ENCODE measurements at regions of chr17 and their contacts with region 1.

Region 1: GRCh38 chr17:45277216-45277849 is 15.4 kb upstream of the SPATA32 start:
- DNase-seq: peak; percentile 96
- ATAC-seq: peak; percentile 80 to 82
- H3K4me3 ChIP-seq: no peak overlapping the region
- H3K27ac ChIP-seq: peak overlapping the region; percentile 52 to 72
- H3K4me1 ChIP-seq: peaks cover 29% of the 10 kb centered on the region
- CTCF ChIP-seq: peak; percentile 92
- EP300 ChIP-seq: no peak
- POLR2A ChIP-seq: no peak
- RAD21 ChIP-seq: peak; percentile 91 to 93

Region 2: GRCh38 chr17:45161019-45161825 is 116.1 kb before region 1 on chr17:
- CTCF ChIA-PET with region 1: no interaction called
- POLR2A ChIA-PET with region 1: no interaction called
- DNase-seq: peak; percentile 98 to 100
- ATAC-seq: peak; percentile 95 to 96
- H3K4me3 ChIP-seq: peak overlapping the region; percentile 81
- H3K27ac ChIP-seq: peak overlapping the region; percentile 98 to 99
- H3K4me1 ChIP-seq: peaks cover 39% of the 10 kb centered on the region
- CTCF ChIP-seq: no peak; the same call in 1 of the 3 replicates
- EP300 ChIP-seq: no peak
- POLR2A ChIP-seq: peak; percentile 48
- RAD21 ChIP-seq: no peak; a peak in 2 of 5 replicates

Region 3: DNA sequence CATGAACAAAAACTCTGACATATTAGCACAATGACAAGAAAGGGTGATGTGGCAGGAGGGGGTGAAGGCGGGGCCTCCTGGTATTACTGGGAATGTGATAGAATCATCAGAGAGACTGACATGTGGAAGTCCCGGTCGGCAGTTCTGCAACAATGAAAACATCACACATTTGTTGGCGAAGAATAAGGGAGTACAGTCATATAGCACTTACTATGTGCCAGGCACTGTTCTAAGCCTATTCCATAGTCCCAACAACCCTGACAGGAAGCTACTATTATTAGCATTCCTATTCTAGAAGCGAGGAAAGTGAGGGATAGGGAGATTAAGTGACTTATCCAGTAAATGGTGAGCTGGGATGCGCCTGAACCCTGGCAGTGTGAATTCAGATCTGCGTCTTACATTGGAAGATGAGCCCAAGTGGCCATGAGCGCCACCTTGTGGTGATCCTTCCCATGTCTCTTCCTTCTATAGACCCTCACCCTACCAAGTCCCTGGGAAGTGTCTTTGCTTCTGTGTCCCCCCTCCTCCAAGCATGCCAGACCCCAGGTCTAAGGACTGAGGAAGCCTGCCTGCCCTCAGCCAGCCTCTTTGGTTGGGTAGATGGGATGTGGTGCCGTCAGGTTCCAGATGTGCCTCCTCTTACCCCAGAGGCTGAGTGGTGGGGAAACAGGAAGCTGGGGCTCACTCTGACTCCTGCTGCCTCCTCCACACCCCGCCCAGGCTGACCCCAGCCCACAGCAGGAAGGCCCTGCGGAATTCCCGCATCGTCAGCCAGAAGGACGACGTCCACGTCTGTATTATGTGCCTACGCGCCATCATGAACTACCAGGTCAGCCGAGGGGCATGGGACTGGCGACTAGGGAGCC is 41.7 kb before region 1 on chr17:
- CTCF ChIA-PET with region 1: interaction called, 28 read pairs
- POLR2A ChIA-PET with region 1: no interaction called
- DNase-seq: peak; percentile 87 to 93
- ATAC-seq: peak; percentile 60 to 75
- H3K4me3 ChIP-seq: no peak overlapping the region
- H3K27ac ChIP-seq: peak overlapping the region; percentile 35 to 66; a peak in 5 of 6 replicates
- H3K4me1 ChIP-seq: peaks cover 33% of the 10 kb centered on the region
- CTCF ChIP-seq: peak; percentile 95
- EP300 ChIP-seq: no peak
- POLR2A ChIP-seq: no peak
- RAD21 ChIP-seq: peak; percentile 79 to 82

Region 4: GRCh38 chr17:45261577-45262515 is 15.5 kb before region 1 on chr17 and contains the start of gene SPATA32:
- CTCF ChIA-PET with region 1: interaction called, 291 read pairs
- POLR2A ChIA-PET with region 1: no interaction called
- DNase-seq: no peak
- ATAC-seq: no peak
- H3K4me3 ChIP-seq: no peak within 1 kb of the TSS
- H3K27ac ChIP-seq: peak within 1 kb of the TSS in 1 of 2 experiments; percentile 54; a peak in 3 of 6 replicates
- H3K4me1 ChIP-seq: peaks cover 46% of the 10 kb centered on the region
- CTCF ChIP-seq: no peak
- EP300 ChIP-seq: no peak
- POLR2A ChIP-seq: no peak
- RAD21 ChIP-seq: no peak
- polyA plus RNA-seq, gene SPATA32: 0.05 and 0.08 TPM in 2 replicates

Region 5: DNA sequence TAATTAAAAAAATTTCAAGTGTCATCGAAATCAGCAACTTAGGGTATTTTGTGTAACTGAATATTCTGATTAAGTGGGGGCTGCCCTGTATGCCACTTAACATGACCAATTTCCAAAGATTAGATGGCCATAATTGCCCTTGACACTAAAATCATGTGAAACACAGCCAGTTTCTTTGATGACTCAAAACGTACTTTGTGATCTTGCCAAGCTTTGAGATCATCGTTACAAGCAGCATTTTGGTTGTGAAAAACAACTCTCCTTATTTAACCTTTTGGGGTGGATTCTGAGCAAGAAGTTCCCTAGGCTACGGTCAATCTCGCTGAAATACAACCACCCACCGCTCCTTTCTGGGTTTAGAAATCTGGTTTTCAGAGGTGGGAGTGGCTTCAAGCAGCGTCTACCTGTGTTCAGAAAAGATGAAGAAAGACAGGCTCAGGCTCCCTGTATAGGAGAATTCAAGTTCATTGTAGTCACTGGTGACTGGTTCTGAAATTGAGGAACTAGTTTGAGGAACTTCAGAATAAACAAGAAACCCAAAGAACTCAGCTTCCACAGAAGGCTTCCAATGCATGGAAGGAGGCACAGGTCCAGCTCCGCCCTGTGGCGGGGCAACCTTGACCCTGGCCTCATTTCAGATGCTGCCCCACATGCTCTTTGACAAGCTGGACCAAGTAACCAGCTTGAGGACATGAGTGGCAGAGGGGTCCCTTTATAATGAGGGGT is 30.1 kb after region 1 on chr17:
- CTCF ChIA-PET with region 1: interaction called, 181 read pairs
- POLR2A ChIA-PET with region 1: interaction called, 4 read pairs
- DNase-seq: peak in 1 of 2 experiments; percentile 69
- ATAC-seq: peak; percentile 16 to 28; a peak in 5 of 6 replicates
- H3K4me3 ChIP-seq: peak overlapping the region; percentile 10; the same call in 1 of the 3 replicates
- H3K27ac ChIP-seq: peak overlapping the region; percentile 77 to 92
- H3K4me1 ChIP-seq: peaks cover 92% of the 10 kb centered on the region
- CTCF ChIP-seq: no peak
- EP300 ChIP-seq: no peak
- POLR2A ChIP-seq: no peak
- RAD21 ChIP-seq: no peak

Region 6: DNA sequence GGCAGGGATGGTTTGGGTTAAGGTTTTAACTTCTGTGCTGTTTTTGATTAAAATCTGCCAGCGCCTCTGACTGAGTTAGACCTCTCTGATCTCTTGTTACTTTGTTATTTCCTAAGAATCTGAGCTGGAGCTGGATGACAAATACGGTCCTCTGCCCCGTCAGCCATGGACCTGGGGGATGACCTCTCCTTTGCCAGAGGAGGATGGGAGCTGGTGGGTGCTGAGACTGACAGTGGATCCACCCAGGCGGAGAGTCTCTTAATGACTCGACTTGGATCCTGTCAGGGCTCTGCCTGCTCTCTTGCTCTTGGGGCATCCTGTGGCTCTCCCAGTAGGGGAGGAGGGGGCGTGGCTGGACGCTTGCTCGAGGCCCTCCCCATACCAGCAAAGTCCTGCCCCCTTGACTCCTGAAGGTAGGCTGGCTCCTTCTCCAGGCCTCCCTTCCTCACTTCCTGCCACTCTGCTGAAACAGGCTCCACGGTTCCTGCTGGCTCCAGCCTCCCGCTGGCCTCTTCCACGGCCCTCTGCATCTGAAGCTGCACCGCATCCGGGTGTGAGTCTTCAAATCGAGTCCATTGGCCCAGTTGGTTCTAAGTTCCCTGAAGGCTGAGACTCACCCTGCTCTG is 64.3 kb after region 1 on chr17:
- CTCF ChIA-PET with region 1: interaction called, 14 read pairs
- POLR2A ChIA-PET with region 1: no interaction called
- DNase-seq: peak; percentile 94 to 96
- ATAC-seq: peak; percentile 98 to 99
- H3K4me3 ChIP-seq: peak overlapping the region; percentile 37
- H3K27ac ChIP-seq: peak overlapping the region; percentile 89 to 91
- H3K4me1 ChIP-seq: peaks cover 39% of the 10 kb centered on the region
- CTCF ChIP-seq: no peak
- EP300 ChIP-seq: no peak
- POLR2A ChIP-seq: peak; percentile 91
- RAD21 ChIP-seq: 0 out of 5 replicates have a peak, but pooled peaks of 1 of the 2 experiments have one; percentile 29

Region 7: DNA sequence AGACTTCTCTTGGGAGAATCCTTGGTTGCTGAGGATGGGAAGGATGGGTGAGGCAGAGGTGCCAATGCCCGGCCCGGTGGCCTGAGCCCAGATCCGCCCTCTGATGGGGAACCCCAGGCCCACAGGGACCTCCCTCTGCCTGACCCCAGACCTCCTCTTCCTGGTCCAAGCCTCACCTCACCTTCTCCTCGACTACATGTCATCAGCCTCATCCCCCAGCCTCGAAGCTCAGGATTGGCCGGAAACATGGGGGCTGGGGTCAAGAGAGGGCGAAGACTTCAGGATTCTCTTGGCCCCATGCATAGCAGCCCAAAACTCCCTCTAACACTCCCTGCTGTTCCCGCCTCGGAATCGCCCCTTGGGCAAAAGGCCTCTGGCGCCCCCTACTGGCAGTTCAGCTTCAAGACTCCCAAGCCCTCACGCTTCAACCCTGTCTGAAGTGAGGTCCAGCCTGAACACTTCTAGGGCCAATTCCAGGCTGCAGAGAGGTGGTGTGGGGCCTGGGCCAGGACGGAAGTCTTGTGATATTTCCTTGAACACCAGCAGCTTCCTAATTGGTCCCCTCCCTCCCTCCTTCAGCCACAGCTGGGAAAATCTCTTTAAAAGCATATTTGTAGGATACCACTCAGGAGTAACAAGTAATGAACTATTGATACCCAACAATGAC is 108.1 kb after region 1 on chr17:
- CTCF ChIA-PET with region 1: interaction called, 1,120 read pairs
- POLR2A ChIA-PET with region 1: interaction called, 6 read pairs
- DNase-seq: peak; percentile 91 to 94
- ATAC-seq: peak; percentile 93 to 97
- H3K4me3 ChIP-seq: no peak overlapping the region
- H3K27ac ChIP-seq: peak overlapping the region; percentile 79 to 97
- H3K4me1 ChIP-seq: peaks cover 50% of the 10 kb centered on the region
- CTCF ChIP-seq: peak; percentile 99
- EP300 ChIP-seq: no peak
- POLR2A ChIP-seq: no peak
- RAD21 ChIP-seq: peak; percentile 100

Measured in A549 (cell line).